A549 (cell line): ENCODE measurements at regions of chr7 and their contacts with region 1.

Region 1: GRCh38 chr7:135801045-135801693 is 52.6 kb upstream of the FAM180A start:
- DNase-seq: peak; percentile 71 to 73
- ATAC-seq: peak; percentile 64 to 87; a peak in 5 of 6 replicates
- H3K4me3 ChIP-seq: no peak overlapping the region
- H3K27ac ChIP-seq: no peak overlapping the region
- H3K4me1 ChIP-seq: no peaks in the 10 kb centered on the region
- CTCF ChIP-seq: peak; percentile 92
- EP300 ChIP-seq: no peak
- POLR2A ChIP-seq: no peak
- RAD21 ChIP-seq: peak; percentile 94 to 96

Region 2: DNA sequence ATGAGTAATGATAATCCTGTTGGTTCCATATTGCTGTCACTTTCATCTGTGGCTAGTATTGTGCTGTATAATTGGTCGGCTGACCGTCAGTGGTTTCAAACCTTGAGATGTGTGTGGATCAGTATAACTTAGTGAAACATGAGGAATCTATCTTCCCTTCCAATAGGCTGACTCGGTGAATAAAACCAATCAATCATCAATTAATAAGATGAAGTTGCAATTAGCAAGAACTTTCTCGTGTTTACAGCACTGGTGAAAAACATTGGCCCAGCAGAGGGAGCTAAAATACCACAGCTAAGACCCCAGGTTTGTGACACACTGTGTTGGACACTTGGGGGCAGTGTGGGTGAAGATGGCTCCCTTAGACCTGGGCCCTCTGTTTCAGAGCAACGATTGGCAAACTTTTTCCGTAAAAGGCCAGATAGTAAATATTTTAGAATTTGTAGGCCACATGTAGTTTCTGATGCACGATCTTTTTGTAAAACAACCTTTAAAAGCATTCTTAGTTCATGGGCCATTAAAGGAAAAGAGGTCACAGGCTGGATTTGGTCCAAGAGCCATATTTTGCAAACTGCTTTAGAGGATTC is 519.7 kb before region 1 on chr7:
- CTCF ChIA-PET with region 1: no interaction called
- POLR2A ChIA-PET with region 1: no interaction called
- DNase-seq: peak; percentile 83 to 85
- ATAC-seq: peak; percentile 91 to 97
- H3K4me3 ChIP-seq: no peak overlapping the region
- H3K27ac ChIP-seq: peak overlapping the region; percentile 44 to 45; a peak in 5 of 6 replicates
- H3K4me1 ChIP-seq: peaks cover 6% of the 10 kb centered on the region; the same call in 2 of the 3 replicates
- CTCF ChIP-seq: peak; percentile 100
- EP300 ChIP-seq: no peak
- POLR2A ChIP-seq: no peak
- RAD21 ChIP-seq: peak; percentile 100

Region 3: DNA sequence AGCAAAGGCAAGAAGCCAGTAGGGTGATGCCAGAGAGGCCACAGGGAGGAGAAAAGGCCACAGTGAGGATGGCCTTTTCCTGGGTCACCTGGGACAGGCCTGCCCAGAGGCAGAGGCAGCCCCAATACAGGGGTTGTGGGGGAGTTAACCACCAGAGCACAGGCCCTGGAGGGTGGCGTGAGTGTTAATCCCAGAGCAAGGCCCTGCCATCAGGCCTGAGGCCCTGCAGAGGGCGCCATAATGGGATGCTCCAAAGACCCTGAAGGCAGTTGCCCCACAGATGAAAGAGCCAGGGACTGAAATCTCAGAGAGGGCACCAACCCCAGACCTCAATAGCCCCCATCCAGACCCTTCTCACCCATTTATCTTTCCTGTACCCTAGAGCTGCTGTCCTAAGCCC is 97.1 kb before region 1 on chr7:
- CTCF ChIA-PET with region 1: no interaction called
- POLR2A ChIA-PET with region 1: no interaction called
- DNase-seq: peak in 1 of 2 experiments; percentile 14
- ATAC-seq: peak in 1 of 2 experiments; percentile 73; a peak in 3 of 6 replicates
- H3K4me3 ChIP-seq: no peak overlapping the region
- H3K27ac ChIP-seq: no peak overlapping the region
- H3K4me1 ChIP-seq: no peaks in the 10 kb centered on the region
- CTCF ChIP-seq: no peak
- EP300 ChIP-seq: no peak
- POLR2A ChIP-seq: no peak
- RAD21 ChIP-seq: no peak

Region 4: DNA sequence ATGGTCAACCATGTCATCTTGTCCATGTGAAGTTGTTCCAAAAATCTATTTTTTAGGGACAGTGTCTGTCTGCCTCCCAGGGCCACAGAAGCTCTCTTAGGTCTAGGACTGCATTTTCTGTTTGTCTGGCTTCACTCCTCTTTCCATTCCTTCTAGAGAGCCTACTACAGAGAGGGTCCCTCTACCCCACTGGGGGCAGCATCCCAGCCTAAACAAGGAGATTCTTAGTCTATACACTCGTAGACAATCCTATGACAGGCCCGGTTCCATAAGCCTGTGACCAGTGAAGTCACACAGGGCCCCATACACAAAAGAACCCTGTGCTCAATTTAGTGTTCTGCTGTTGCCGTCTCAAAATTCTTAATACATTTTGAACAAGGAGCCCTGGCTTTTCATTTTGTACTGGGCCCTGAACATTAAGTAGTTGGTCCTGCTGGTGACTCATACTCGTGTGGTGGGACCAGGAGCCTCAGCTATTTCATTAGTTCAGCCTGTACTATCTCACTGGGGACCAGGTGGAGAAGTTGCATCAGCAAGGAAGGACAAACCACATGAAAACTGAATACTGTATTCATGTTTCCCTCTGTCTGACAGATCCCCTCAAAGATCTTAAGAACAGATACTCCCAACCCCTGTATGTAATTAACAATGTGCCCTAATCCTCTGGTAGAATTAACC is 29.1 kb before region 1 on chr7:
- CTCF ChIA-PET with region 1: interaction called, 11 read pairs
- POLR2A ChIA-PET with region 1: no interaction called
- DNase-seq: no peak
- ATAC-seq: no peak
- H3K4me3 ChIP-seq: no peak overlapping the region
- H3K27ac ChIP-seq: peak overlapping the region in 1 of 2 experiments; percentile 49; a peak in 1 of 6 replicates
- H3K4me1 ChIP-seq: peaks cover 20% of the 10 kb centered on the region
- CTCF ChIP-seq: no peak
- EP300 ChIP-seq: no peak
- POLR2A ChIP-seq: no peak
- RAD21 ChIP-seq: no peak

Region 5: GRCh38 chr7:135815033-135815432 is 13.9 kb after region 1 on chr7:
- CTCF ChIA-PET with region 1: interaction called, 14 read pairs
- POLR2A ChIA-PET with region 1: no interaction called
- DNase-seq: no peak
- ATAC-seq: no peak
- H3K4me3 ChIP-seq: no peak overlapping the region
- H3K27ac ChIP-seq: no peak overlapping the region
- H3K4me1 ChIP-seq: no peaks in the 10 kb centered on the region
- CTCF ChIP-seq: no peak
- EP300 ChIP-seq: no peak
- POLR2A ChIP-seq: no peak
- RAD21 ChIP-seq: no peak

Region 6: DNA sequence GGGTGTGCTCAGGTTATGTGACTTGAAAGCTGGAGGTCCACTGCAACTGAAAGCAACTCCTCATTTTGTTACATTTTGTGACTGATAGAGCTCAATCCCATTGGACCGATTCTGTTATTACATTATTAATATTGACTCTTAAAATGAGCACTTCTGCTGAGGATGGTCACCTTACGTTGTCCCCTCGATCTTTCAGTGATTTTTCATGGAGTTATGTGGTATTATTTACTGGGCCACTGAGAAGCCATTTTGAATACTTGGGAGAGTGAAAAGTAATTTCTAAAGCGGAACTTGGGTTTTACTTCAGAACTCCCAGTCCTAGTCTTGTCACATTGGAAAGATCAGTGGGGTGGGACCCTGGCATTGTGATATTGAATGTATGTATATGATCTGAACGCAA is 43.7 kb after region 1 on chr7:
- CTCF ChIA-PET with region 1: no interaction called
- POLR2A ChIA-PET with region 1: no interaction called
- DNase-seq: no peak
- ATAC-seq: no peak
- H3K4me3 ChIP-seq: no peak overlapping the region
- H3K27ac ChIP-seq: no peak overlapping the region
- H3K4me1 ChIP-seq: no peaks in the 10 kb centered on the region
- CTCF ChIP-seq: no peak
- EP300 ChIP-seq: no peak
- POLR2A ChIP-seq: no peak
- RAD21 ChIP-seq: no peak

Region 7: GRCh38 chr7:136000288-136000913 is 199.2 kb after region 1 on chr7:
- CTCF ChIA-PET with region 1: interaction called, 134 read pairs
- POLR2A ChIA-PET with region 1: no interaction called
- DNase-seq: no peak
- ATAC-seq: peak in 1 of 2 experiments; percentile 24; a peak in 1 of 6 replicates
- H3K4me3 ChIP-seq: no peak overlapping the region
- H3K27ac ChIP-seq: peak overlapping the region; percentile 14 to 41; a peak in 1 of 6 replicates
- H3K4me1 ChIP-seq: 0 out of 3 replicates have a peak, but pooled peaks cover 9% of the 10 kb centered on the region
- CTCF ChIP-seq: no peak
- EP300 ChIP-seq: no peak
- POLR2A ChIP-seq: no peak
- RAD21 ChIP-seq: no peak

Region 8: DNA sequence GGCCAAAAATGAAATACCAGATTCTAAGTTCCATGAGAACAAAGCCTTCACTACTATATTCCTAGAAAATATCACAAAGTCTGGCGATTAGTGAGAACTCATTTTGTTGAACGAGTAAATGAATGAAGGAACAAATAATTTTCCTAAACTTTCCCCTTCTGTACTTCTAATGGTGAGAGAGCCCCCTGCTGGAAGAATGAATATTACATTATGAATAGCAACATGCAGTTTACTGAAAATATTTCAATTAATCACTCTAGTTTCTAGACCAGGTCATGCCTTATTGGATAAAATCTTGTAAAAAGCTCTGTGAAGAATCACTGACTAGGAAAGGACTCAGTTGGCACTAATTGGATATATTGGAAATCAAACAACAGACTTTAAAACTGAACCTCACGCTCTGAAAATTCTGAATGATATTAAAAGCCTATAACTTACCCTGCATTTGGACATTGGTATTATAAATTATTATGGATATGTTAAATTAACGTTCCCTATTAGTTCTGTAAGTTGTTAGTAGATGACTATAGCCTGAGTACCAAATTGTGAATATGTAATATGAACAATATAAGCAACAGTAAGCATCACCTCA is 208.4 kb after region 1 on chr7:
- CTCF ChIA-PET with region 1: interaction called, 134 read pairs
- POLR2A ChIA-PET with region 1: no interaction called
- DNase-seq: peak; percentile 15 to 49
- ATAC-seq: peak in 1 of 2 experiments; percentile 70; a peak in 4 of 6 replicates
- H3K4me3 ChIP-seq: no peak overlapping the region
- H3K27ac ChIP-seq: no peak overlapping the region
- H3K4me1 ChIP-seq: no peaks in the 10 kb centered on the region
- CTCF ChIP-seq: peak; percentile 84
- EP300 ChIP-seq: no peak
- POLR2A ChIP-seq: no peak
- RAD21 ChIP-seq: peak; percentile 86 to 87